A673 (cell line): ENCODE measurements at regions of chr9 and their contacts with region 1.

Region 1: GRCh38 chr9:71249729-71250317 is 128.4 kb upstream of the TRPM3 start:
- DNase-seq: peak; percentile 70
- H3K4me3 ChIP-seq: no peak overlapping the region
- H3K27ac ChIP-seq: no peak overlapping the region
- H3K4me1 ChIP-seq: no peaks in the 10 kb centered on the region
- H3K27me3 ChIP-seq: no peaks in the 10 kb centered on the region
- CTCF ChIP-seq: peak; percentile 86

Region 2: DNA sequence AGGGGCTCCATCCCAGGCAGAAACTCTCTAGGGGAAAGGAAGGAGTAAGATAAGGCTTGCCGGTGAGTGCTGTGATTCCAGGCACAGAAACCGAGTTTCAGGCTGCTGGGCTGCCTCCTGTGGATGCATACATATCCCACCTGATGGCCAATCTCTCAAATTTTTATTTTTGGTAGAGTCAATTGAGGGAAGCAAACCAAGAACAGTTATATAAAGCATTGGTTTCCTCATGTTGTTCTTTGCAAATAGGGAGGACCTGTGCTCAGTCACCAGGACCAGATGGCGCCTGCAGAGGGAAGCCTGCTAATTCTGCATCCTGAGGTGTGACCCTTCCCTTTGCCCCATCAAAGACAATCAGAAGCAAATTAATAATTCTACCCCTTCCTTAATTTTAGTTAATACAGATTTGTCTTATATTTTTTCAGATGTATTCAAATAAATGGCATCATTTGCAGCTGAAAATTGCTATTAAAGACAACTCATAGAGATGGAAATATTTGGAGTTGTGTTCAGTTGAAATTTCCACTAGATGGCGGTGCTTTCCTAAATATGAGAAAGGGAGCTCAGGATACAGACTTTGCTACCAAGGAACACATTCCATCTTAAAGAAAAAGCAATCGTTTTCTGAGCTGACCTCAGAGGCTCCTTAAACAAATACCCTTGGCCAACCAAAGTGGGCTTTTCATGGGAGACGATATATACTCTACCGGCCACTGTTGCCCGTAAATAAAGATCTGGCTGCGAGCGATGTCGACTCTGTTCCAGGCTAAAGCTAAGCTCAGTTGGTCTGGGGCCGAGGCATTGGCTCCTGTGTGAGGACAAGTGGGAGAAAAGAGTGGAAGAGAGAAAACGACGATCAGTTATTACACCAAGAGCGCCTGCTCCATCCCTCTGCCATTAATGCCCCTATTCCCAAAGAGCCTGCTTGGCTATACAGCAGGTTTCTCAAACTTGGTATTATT is 609.7 kb before region 1 on chr9:
- CTCF ChIA-PET with region 1: interaction called, 19 read pairs
- POLR2A ChIA-PET with region 1: no interaction called
- intact Hi-C with region 1: loop called (anchors 1 kb)
- DNase-seq: peak; percentile 61
- H3K4me3 ChIP-seq: no peak overlapping the region
- H3K27ac ChIP-seq: no peak overlapping the region
- H3K4me1 ChIP-seq: no peaks in the 10 kb centered on the region
- H3K27me3 ChIP-seq: no peaks in the 10 kb centered on the region
- CTCF ChIP-seq: peak; percentile 73

Region 3: DNA sequence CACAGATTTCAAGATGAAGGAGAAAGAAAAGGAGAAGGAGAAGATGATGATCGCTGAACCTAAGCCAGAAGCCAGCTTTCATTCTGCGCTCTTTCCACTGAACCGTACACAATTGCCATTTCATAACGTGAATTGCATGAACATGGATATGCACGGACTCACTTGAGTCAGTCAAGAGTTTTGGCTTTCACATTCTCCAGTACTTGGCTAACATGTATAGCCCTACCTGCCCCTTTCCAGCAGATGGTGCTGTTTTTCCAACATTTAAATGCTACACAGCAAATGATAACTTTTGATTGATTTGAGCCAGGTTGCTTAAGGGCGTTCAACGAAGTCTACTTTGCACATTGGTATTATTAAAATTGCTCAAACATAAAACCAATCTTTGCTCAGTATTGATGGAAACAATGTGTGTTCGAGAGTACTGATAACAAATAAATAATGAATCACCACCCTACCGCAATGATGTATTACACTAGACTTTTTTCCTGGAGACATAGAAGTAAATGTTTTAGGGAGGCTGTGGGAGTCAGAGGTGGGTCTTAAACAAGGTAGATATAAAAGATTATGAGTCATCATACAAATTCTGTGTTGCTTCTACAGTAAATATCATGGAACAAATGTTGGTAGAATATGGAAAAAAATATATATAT is 324.8 kb before region 1 on chr9:
- CTCF ChIA-PET with region 1: no interaction called
- POLR2A ChIA-PET with region 1: no interaction called
- intact Hi-C with region 1: loop called (anchors 1 kb)
- DNase-seq: peak; percentile 71
- H3K4me3 ChIP-seq: no peak overlapping the region
- H3K27ac ChIP-seq: no peak overlapping the region
- H3K4me1 ChIP-seq: no peaks in the 10 kb centered on the region
- H3K27me3 ChIP-seq: no peaks in the 10 kb centered on the region
- CTCF ChIP-seq: peak; percentile 82

Region 4: DNA sequence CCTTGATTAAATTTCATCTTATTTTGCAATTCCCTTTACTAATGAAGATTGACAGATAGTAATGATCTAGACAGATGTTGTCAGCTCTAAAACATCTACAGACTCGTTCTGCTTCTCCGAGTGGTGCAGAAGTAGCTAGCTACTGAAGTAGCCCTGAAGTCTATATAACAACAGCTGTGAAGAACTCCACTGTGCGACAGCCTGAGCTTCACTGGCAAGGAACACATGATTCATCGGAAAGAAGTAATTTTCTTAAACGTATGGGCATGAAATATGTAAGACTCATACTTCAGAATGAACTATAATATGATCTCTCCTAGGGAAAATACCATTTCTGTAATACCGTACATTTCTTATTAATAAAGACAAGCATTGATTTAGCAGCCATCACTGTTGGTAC is 224.6 kb before region 1 on chr9:
- CTCF ChIA-PET with region 1: no interaction called
- POLR2A ChIA-PET with region 1: no interaction called
- intact Hi-C with region 1: loop called (anchors 10 kb)
- DNase-seq: no peak
- H3K4me3 ChIP-seq: no peak overlapping the region
- H3K27ac ChIP-seq: no peak overlapping the region
- H3K4me1 ChIP-seq: no peaks in the 10 kb centered on the region
- H3K27me3 ChIP-seq: peaks cover 12% of the 10 kb centered on the region
- CTCF ChIP-seq: no peak